Posterior cingulate gyrus (tissue), 11 donors: ENCODE measurements at regions of chr6 and their contacts with region 1.

Region 1: DNA sequence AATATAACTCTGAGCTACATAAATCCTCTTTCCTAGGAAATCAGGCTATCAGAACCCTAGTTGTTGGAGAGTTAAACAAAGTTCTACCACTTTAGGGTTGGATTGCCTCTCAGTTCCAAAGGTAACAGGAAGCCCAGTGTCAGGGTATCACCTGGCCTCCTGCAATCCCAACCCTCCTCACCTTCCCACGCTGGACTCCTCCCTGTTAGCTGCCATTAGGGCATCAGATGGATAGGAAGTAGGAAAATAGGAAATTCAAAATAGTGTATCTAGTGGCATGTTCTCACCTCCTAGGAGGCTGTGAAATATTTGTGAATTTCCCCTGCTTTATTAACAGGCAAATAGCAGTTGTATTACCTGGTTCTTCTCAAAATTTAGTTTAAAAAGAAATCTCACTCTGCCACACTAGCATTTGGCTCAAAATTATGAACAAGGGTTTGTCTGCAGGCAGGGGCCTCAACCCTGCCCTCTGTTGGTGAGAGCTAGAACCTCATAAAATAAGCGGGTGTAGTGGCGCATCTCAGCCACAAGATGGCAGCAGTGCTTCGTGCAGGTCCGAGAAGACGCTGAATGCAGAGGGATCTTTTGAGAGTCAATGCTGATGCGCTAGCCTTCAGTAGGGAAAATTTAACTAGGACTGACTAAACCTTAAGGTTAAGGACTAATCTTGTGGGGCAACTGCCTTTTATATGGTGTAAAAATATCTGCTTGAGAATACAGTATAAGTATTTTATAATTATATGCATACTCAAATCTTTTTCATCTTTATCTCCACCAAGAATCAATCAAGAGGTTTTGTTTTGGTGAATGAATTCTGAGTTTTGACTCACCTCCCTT is 209.8 kb upstream of the KCNQ5 start:
- DNase-seq: peak; percentile 68 to 97 (median 78)

Region 2: DNA sequence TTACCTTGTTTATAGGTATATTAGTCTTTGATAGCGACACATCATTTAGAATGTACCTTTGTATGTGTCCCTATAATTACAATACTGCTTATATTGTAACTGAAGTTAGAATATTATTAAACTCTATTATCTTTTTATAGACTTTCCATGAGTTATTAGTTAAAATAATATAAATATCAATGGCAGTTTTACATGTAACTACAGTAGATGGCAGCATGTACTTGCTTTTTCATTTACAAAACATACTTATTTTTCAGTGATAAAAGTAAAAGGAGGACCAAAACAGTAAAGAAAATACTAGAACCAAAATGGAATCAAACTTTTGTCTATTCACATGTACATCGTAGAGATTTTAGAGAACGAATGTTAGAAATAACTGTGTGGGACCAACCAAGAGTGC is 161.4 kb before region 1 on chr6:
- intact Hi-C with region 1: no loop called
- DNase-seq: no peak

Region 3: GRCh38 chr6:72464791-72465691 is 53.0 kb after region 1 on chr6:
- intact Hi-C with region 1: no loop called
- DNase-seq: peak in 4 of 10 donors; percentile 8 to 77 (median 30)

Region 4: DNA sequence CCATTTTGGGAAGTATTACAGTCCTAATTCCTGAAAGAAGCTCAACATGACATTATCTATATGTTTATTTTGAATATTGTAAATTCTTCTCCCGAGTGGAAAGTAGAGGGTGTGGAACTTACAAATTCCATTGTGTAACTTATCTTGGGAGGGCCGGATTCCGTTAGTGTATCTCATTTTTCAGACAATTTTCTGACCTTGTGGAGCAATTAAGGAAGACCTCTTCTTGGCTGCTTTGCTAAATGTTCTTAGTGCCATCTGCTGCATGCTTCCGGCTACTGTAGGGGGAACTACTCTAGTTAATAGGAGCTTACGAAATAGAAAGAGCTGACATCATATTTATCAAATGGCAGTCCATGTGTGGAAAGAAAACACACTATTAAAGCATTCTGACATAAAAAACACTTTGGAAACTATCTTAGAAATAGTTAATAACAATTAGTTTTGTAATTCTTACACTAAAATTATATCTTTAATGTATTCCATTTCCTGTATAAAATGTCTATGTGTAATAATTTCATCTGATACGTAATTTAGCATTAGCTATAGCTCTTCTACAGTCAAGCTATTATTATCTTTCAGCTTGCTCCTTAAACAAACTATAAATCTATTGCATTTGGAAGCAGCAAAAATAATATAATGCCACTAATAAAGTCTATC is 168.3 kb after region 1 on chr6:
- intact Hi-C with region 1: loop called (anchors 5 kb)
- DNase-seq: peak in 2 of 10 donors; percentile 14 to 26

Region 5: DNA sequence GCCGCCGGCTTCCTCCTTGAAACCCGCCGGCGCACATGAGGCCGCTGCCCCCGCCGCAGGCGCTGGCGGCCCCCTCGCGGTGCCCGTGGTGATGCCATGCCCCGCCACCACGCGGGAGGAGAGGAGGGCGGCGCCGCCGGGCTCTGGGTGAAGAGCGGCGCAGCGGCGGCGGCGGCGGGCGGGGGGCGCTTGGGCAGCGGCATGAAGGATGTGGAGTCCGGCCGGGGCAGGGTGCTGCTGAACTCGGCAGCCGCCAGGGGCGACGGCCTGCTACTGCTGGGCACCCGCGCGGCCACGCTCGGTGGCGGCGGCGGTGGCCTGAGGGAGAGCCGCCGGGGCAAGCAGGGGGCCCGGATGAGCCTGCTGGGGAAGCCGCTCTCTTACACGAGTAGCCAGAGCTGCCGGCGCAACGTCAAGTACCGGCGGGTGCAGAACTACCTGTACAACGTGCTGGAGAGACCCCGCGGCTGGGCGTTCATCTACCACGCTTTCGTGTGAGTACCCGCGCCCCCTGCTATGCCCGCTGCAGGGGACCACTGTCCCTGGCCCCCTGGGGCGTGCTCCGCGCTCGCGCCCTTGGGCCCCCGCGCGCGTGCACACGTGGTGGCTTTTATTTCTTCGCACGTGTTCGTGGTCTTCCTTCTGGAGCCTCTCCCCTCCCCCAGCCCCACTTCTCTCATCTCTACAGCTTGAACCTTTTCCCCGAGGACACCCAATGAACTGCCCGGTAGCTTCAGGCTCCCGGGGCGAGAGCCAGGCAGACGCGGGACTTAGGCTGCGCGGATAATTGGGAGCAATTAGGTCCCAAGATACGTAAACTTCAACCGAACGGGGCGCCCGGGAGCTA is 210.2 kb after region 1 on chr6:
- intact Hi-C with region 1: loop called (anchors 10 kb)
- DNase-seq: peak; percentile 18 to 92 (median 51)

Region 6: DNA sequence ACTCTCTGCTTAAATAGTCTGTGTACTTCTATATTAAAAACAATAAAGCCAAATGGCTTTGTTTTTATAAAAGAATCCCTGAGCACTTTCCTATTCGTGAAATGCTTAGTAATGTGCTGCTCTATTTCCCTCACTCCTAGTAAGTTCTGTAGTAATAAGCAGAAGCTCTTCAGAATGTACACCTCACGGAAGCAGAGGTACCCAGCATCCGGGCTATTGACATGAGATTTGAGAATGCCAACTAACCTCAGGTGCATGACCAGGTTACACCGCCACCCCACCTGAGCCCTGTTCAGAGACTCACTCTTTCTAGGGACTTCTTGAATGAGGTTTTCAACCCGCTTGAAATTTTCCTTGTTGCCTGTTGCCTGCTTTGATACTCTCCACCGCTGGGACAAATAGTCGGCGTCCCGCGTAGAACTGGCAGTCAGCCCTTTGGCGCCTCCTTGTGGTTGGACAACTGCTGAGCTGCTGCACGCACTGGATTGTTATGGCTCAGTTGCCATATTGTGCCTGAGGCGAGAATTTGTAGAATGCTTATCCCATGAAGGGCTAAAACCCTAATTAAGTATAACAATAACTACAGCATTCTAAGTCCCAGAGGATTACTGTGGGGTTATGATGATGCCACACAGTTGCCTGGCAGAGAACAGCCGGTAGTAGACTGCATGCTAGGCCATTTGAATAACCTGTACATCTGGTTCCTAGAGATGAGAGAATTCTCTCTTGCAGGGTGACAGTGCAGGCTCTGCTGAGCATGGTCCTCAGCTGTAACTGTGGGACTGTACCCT is 717.8 kb after region 1 on chr6:
- intact Hi-C with region 1: loop called (anchors 2 kb)
- DNase-seq: peak; percentile 48 to 96 (median 86)

Region 7: DNA sequence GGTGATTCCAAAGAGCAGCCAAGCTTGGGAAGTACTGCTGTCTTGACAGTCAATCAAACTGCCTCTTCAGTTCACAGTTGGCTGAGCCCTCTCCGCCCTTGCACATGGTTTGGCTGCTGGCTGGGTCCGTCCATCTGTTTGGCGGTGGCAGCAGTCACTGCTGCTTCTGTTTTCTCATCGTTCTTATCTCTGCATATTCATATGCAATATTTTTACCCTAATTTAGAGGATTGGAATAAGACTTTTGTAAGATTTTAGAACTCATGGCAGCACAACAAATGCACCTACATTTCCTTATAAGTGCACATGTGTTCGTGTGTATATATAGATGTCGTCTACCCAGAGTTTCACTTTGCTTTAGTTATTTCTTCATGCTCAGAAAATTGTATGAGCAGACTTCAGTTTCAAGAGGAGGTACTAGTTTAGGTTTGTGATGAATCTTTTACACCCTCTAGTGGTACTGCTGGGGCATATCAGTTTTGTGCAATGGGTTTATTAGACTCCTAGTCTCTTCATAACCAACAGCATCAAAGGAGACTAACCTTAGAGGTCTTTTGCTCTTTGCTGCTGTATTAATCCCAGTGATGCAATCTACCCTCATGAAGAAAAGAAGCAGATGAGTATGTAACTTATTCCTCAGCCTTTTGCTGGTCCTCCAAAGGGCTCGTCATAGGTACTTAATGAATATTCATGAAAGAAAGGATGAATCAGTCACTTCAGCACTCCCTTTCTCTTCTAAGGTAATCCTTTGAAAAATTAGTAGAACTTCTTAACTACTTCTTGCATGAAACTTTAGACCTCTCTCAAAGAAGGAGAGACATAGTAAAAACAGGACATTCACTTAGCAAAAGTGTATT is 768.9 kb after region 1 on chr6:
- intact Hi-C with region 1: loop called (anchors 2 kb)
- DNase-seq: peak in 8 of 10 donors; percentile 32 to 92 (median 44)